ENCODE measurements at regions of chr6 and their contacts with region 1.

Region 1: GRCh38 chr6:170147832-170148708 is 142.8 kb downstream of the DLL1 start:
- DNase-seq: peak; percentile 22
- H3K4me3 Mint-ChIP-seq: peak overlapping the region; percentile 38
- H3K27ac Mint-ChIP-seq: peak overlapping the region; percentile 59
- H3K4me1 Mint-ChIP-seq: peaks cover 17% of the 10 kb centered on the region
- H3K27me3 Mint-ChIP-seq: peaks cover 23% of the 10 kb centered on the region

Region 2: DNA sequence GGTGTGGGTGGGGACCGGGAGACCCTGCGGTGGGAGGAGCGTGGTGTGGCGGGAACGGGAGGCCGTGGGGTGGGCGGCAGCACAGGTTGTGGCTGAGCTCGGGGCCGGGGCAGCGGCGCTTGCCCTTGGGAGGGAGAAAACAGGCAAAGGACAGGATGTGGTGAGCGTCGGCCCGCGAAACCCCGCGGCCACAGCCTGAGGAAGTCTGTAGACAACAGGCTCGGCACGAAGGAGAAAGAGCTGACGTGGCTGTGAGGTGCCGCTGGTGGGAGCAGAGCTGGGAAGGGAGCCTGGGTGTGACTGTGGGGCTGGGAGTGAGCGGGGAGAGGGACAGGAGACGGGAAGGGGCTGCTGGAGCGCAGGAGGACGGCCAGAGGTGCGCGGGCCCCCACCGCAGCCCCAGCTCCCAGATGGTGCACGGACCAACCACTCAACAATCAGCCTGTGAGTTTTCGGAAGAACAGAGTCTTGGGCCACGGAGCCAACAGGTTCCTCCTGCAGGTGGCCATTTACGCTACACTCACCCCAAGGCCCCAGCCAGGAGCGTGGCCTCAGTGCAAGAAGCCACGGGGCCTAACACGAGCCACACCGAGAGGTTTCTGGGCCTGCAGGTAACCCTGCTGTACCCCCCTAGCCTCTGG is 60.0 kb before region 1 on chr6:
- intact Hi-C with region 1: loop called (anchors 5 kb)
- DNase-seq: peak; percentile 55
- H3K4me3 Mint-ChIP-seq: peak overlapping the region; percentile 82
- H3K27ac Mint-ChIP-seq: peak overlapping the region; percentile 98
- H3K4me1 Mint-ChIP-seq: peaks cover 40% of the 10 kb centered on the region
- H3K27me3 Mint-ChIP-seq: peaks cover 2% of the 10 kb centered on the region

Region 3: GRCh38 chr6:170279977-170280688 is 132.1 kb after region 1 on chr6:
- intact Hi-C with region 1: loop called (anchors 10 kb)
- DNase-seq: no peak
- H3K4me3 Mint-ChIP-seq: peak overlapping the region; percentile 30
- H3K27ac Mint-ChIP-seq: no peak overlapping the region
- H3K4me1 Mint-ChIP-seq: no peaks in the 10 kb centered on the region
- H3K27me3 Mint-ChIP-seq: peaks cover 54% of the 10 kb centered on the region

Region 4: GRCh38 chr6:170316071-170316470 is 168.0 kb after region 1 on chr6:
- intact Hi-C with region 1: no loop called
- DNase-seq: no peak
- H3K4me3 Mint-ChIP-seq: no peak overlapping the region
- H3K27ac Mint-ChIP-seq: no peak overlapping the region
- H3K4me1 Mint-ChIP-seq: peaks cover 38% of the 10 kb centered on the region
- H3K27me3 Mint-ChIP-seq: no peaks in the 10 kb centered on the region